CD14-positive monocyte (primary cell): ENCODE measurements at regions of chr12 and their contacts with region 1.

Region 1: GRCh38 chr12:51424662-51425438 is at the start of gene SLC4A8:
- DNase-seq: peak; percentile 63 to 71 (median 64)
- H3K4me3 ChIP-seq: peak within 1 kb of the TSS; percentile 18 to 70 (median 37)
- H3K4me3 Mint-ChIP-seq: peak within 1 kb of the TSS; percentile 70 to 83
- H3K27ac ChIP-seq: no peak within 1 kb of the TSS
- H3K27ac Mint-ChIP-seq: no peak within 1 kb of the TSS
- H3K4me1 ChIP-seq: peaks cover 10 to 11% of the 10 kb centered on the region in 2 donors
- H3K4me1 Mint-ChIP-seq: peaks cover 11% of the 10 kb centered on the region
- H3K27me3 ChIP-seq: peaks cover 10 to 26% of the 10 kb centered on the region in 2 donors
- H3K27me3 Mint-ChIP-seq: peaks cover 22 to 35% (median 25%) of the 10 kb centered on the region in 3 donors
- CTCF ChIP-seq: peak; percentile 92
- polyA plus RNA-seq, gene SLC4A8: 1.9 to 5.4 (median 2.3) TPM

Region 2: DNA sequence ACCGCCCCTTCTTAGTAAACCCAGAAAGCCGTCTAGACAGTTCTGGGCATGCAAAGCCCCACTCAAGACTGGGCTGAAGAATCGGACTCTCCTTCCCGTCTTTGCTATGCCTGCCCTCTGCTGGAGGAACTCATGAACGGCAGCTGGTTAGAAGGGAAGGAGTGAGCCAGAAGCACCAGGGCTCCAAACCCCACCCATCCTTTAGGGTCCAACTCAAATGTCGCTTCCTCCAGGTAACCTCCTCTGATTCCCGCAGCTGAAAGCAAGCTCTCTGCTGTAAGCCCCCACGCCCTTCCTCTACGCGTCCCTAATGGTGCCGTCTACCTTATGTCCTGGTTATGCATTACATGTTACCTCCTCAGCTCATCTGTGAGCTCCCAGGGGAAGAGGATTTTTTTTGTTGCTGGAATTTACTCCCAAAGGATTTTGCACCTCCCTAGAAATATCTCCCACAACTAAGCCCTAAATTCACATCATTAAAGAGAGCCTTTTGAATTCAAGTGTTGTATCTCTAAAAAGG is 107.2 kb after region 1 on chr12:
- intact Hi-C with region 1: loop called (anchors 2 to 5 kb)
- DNase-seq: peak; percentile 38 to 52 (median 48)
- H3K4me3 ChIP-seq: no peak overlapping the region
- H3K4me3 Mint-ChIP-seq: peak overlapping the region in 1 of 2 donors; percentile 39
- H3K27ac ChIP-seq: no peak overlapping the region
- H3K27ac Mint-ChIP-seq: no peak overlapping the region
- H3K4me1 ChIP-seq: no peaks in the 10 kb centered on the region
- H3K4me1 Mint-ChIP-seq: peaks cover 4% of the 10 kb centered on the region
- H3K27me3 ChIP-seq: no peaks in the 10 kb centered on the region
- H3K27me3 Mint-ChIP-seq: peaks cover 8 to 13% (median 10%) of the 10 kb centered on the region in 3 donors
- CTCF ChIP-seq: peak; percentile 93

Region 3: DNA sequence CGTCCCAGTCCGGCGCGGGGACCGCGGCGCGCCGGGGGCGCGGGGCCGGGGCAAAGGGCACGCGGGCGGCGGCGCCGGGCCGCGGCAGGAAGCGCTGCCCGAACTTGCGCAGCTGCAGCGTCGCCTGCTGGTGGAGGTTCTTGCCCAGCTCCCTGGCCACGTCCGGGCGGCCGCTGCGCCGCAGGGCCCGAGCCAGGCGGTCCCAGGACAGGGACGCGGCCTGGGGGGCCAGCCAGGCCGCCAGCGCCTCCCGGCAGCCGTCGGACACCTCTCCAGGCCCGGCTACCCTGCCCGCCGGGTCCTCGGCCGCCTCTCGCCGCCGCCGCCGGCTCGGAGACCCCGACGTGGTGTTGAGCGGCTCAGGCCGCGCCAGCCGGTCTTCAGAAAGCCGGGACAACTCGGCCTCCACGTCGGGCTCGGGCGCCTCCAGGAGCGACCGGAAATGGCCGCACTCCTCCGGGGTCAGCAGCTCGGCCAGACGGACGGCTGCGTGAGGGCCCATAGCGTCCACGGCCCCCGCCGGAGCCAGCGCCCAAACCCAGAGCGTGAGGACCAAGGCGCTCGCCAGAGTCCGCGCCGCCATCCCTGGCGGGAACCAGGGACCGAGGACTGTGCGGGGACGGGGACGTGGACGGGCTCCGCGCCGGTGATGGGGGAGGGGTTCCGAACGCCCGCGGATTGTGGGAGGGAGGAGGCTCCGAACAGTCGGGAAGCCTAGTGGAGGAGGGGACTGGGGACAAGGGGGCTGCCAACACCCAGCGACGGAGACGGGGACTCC is 389.6 kb after region 1 on chr12:
- intact Hi-C with region 1: loop called in 1 of 2 experiments (anchors 10 kb)
- DNase-seq: peak; percentile 79 to 80 (median 80)
- H3K4me3 ChIP-seq: peak overlapping the region; percentile 19 to 76 (median 35)
- H3K4me3 Mint-ChIP-seq: peak overlapping the region; percentile 70 to 78
- H3K27ac ChIP-seq: peak overlapping the region in 1 of 2 donors; percentile 26
- H3K27ac Mint-ChIP-seq: peak overlapping the region in 2 of 7 donors; percentile 36 to 50
- H3K4me1 ChIP-seq: peaks cover 20 to 40% of the 10 kb centered on the region in 2 donors
- H3K4me1 Mint-ChIP-seq: peaks cover 32% of the 10 kb centered on the region
- H3K27me3 ChIP-seq: peaks cover 0 to 17% of the 10 kb centered on the region in 2 donors
- H3K27me3 Mint-ChIP-seq: peaks cover 10 to 33% (median 25%) of the 10 kb centered on the region in 3 donors
- CTCF ChIP-seq: peak; percentile 66